ENCODE measurements at regions of chr5 and their contacts with region 1.

Region 1: DNA sequence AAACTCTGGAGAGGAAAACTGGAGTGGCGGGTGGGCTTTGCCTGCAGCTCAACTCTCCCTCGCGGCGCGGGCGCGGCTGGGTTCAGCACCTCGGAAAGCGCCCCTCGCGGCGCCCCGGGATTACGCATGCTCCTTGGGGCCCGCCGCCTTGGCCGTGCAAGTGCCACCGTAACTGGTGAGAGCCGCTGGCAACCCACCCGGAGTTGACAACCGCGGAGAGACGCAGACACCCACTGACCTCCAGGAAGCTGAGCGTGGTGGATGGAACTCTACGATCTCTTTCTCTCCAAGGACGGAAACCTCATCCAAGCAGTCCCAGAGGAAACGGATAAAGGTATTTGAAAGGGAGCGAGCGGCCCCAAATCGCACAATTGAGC is 194 bp upstream of the RXFP3 start:
- DNase-seq: no peak
- ATAC-seq: peak; percentile 30; the same call in 2 of the 3 replicates
- H3K4me3 ChIP-seq: peak overlapping the region; percentile 16; the same call in 1 of the 2 replicates
- H3K27ac ChIP-seq: no peak overlapping the region
- H3K4me1 ChIP-seq: peaks cover 16% of the 10 kb centered on the region
- H3K27me3 ChIP-seq: no peaks in the 10 kb centered on the region; a peak in 1 of 4 replicates
- CTCF ChIP-seq: 0 out of 6 replicates have a peak, but pooled peaks of 1 of the 3 experiments have one; percentile 8
- EP300 ChIP-seq: no peak
- POLR2A ChIP-seq: no peak
- RAD21 ChIP-seq: no peak

Region 2: GRCh38 chr5:33470544-33470943 is 465.4 kb before region 1 on chr5:
- CTCF ChIA-PET with region 1: interaction called, 58 read pairs
- POLR2A ChIA-PET with region 1: interaction called, 3 read pairs
- RAD21 ChIA-PET with region 1: interaction called, 29 read pairs
- SMC1A ChIA-PET with region 1: interaction called, 52 read pairs
- in situ Hi-C with region 1: no loop called
- intact Hi-C with region 1: loop called (anchors 1 kb)
- DNase-seq: no peak
- ATAC-seq: peak; percentile 74
- H3K4me3 ChIP-seq: no peak overlapping the region
- H3K27ac ChIP-seq: no peak overlapping the region
- H3K4me1 ChIP-seq: no peaks in the 10 kb centered on the region
- H3K27me3 ChIP-seq: no peaks in the 10 kb centered on the region
- CTCF ChIP-seq: peak in 1 of 3 experiments; percentile 39; a peak in 1 of 6 replicates
- EP300 ChIP-seq: no peak
- POLR2A ChIP-seq: no peak
- RAD21 ChIP-seq: peak; percentile 70

Region 3: GRCh38 chr5:33641744-33642505 is 294.1 kb before region 1 on chr5:
- CTCF ChIA-PET with region 1: interaction called, 15 read pairs
- POLR2A ChIA-PET with region 1: no interaction called
- RAD21 ChIA-PET with region 1: interaction called, 17 read pairs
- SMC1A ChIA-PET with region 1: interaction called, 9 read pairs
- in situ Hi-C with region 1: no loop called
- intact Hi-C with region 1: no loop called
- DNase-seq: peak; percentile 37
- ATAC-seq: peak; percentile 79
- H3K4me3 ChIP-seq: no peak overlapping the region
- H3K27ac ChIP-seq: no peak overlapping the region
- H3K4me1 ChIP-seq: no peaks in the 10 kb centered on the region
- H3K27me3 ChIP-seq: no peaks in the 10 kb centered on the region
- CTCF ChIP-seq: no peak
- EP300 ChIP-seq: no peak
- POLR2A ChIP-seq: no peak
- RAD21 ChIP-seq: no peak

Region 4: DNA sequence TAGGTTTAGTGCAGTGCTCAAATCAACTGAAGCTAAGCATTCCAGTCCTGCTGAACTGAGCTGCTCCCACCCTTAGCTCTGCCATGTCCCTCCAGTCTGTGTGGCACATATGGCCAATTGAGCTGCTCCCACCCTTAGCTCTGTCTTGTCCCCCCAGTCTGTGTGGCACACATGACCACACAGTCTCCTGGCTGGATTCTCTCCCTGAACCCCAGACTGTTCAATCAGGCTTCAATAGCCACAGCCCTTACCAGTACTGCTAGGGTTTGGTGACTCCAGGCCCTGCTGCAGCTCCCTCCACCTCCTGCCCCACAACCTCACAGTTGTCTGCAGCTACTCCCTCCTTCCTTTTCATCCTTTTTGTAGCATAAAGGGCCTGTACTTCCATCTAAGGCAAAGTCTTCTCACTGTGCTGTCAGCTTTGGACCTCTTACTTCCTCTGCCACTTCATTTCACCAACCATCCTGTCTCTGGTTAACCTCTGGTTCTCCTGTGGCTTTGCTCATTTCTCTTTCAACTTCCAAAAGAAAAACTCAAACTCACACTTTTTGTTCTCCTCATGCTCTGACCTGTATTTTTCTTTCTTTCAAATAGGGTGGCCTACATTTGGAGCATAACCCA is 95.0 kb before region 1 on chr5:
- CTCF ChIA-PET with region 1: interaction called, 10 read pairs
- POLR2A ChIA-PET with region 1: interaction called, 3 read pairs
- RAD21 ChIA-PET with region 1: interaction called, 41 read pairs
- SMC1A ChIA-PET with region 1: interaction called, 27 read pairs
- in situ Hi-C with region 1: no loop called
- intact Hi-C with region 1: no loop called
- DNase-seq: peak; percentile 58
- ATAC-seq: peak; percentile 78
- H3K4me3 ChIP-seq: no peak overlapping the region; the same call in 1 of the 2 replicates
- H3K27ac ChIP-seq: peak overlapping the region; percentile 83
- H3K4me1 ChIP-seq: peaks cover 43% of the 10 kb centered on the region
- H3K27me3 ChIP-seq: no peaks in the 10 kb centered on the region
- CTCF ChIP-seq: no peak
- EP300 ChIP-seq: no peak
- POLR2A ChIP-seq: no peak
- RAD21 ChIP-seq: 0 out of 2 replicates have a peak, but pooled peaks have one; percentile 2

Region 5: DNA sequence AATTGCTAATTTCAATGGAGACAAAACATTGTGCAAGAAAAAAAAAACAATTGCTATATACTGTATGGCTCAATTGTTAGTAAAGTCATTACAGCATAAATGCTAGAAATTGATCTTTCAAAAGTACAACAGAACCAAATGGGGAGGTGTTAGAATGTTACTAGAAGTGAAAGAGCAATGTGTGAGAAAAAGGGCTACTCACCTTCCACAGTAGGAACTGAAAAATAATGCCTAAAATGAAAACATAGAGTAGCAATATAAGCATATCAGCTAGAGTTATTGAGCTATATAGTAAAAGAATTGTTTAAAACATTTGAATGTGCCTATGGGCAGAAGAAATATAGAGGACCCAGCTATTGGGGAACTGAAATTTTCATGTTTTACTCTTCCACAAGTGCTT is 10.7 kb before region 1 on chr5:
- CTCF ChIA-PET with region 1: interaction called, 8 read pairs
- POLR2A ChIA-PET with region 1: interaction called, 3 read pairs
- RAD21 ChIA-PET with region 1: interaction called, 22 read pairs
- SMC1A ChIA-PET with region 1: interaction called, 46 read pairs
- in situ Hi-C with region 1: no loop called
- intact Hi-C with region 1: no loop called
- DNase-seq: no peak
- ATAC-seq: peak; percentile 80
- H3K4me3 ChIP-seq: no peak overlapping the region
- H3K27ac ChIP-seq: peak overlapping the region; percentile 51; the same call in 1 of the 2 replicates
- H3K4me1 ChIP-seq: peaks cover 19% of the 10 kb centered on the region
- H3K27me3 ChIP-seq: no peaks in the 10 kb centered on the region
- CTCF ChIP-seq: no peak
- EP300 ChIP-seq: 0 out of 4 replicates have a peak, but pooled peaks of 1 of the 2 experiments have one; percentile 30
- POLR2A ChIP-seq: no peak
- RAD21 ChIP-seq: no peak

Measured in GM12878 (cell line).